GM12878 (cell line): ENCODE measurements at regions of chr7 and their contacts with region 1.

Region 1: GRCh38 chr7:34759452-34760125 is 101.6 kb downstream of the NPSR1 start:
- DNase-seq: no peak
- ATAC-seq: no peak
- H3K4me3 ChIP-seq: no peak overlapping the region
- H3K27ac ChIP-seq: no peak overlapping the region
- H3K4me1 ChIP-seq: no peaks in the 10 kb centered on the region
- H3K27me3 ChIP-seq: no peaks in the 10 kb centered on the region
- CTCF ChIP-seq: peak; percentile 55 to 57 (median 56); a peak in 5 of 6 replicates
- EP300 ChIP-seq: no peak
- POLR2A ChIP-seq: no peak
- RAD21 ChIP-seq: peak; percentile 32; the same call in 1 of the 2 replicates

Region 2: GRCh38 chr7:34682089-34682488 is 77.5 kb before region 1 on chr7:
- CTCF ChIA-PET with region 1: interaction called, 38 read pairs
- POLR2A ChIA-PET with region 1: interaction called, 5 read pairs
- RAD21 ChIA-PET with region 1: interaction called, 37 read pairs
- SMC1A ChIA-PET with region 1: interaction called, 13 read pairs
- in situ Hi-C with region 1: no loop called
- intact Hi-C with region 1: loop called (anchors 2 kb)
- DNase-seq: no peak
- ATAC-seq: no peak
- H3K4me3 ChIP-seq: no peak overlapping the region
- H3K27ac ChIP-seq: no peak overlapping the region
- H3K4me1 ChIP-seq: no peaks in the 10 kb centered on the region
- H3K27me3 ChIP-seq: no peaks in the 10 kb centered on the region
- CTCF ChIP-seq: no peak
- EP300 ChIP-seq: no peak
- POLR2A ChIP-seq: no peak
- RAD21 ChIP-seq: no peak

Region 3: GRCh38 chr7:34727464-34727995 is 32.1 kb before region 1 on chr7:
- CTCF ChIA-PET with region 1: interaction called, 92 read pairs
- POLR2A ChIA-PET with region 1: interaction called, 36 read pairs
- RAD21 ChIA-PET with region 1: interaction called, 362 read pairs
- SMC1A ChIA-PET with region 1: interaction called, 107 read pairs
- in situ Hi-C with region 1: no loop called
- intact Hi-C with region 1: loop called (anchors 1 kb)
- DNase-seq: no peak
- ATAC-seq: peak; percentile 76
- H3K4me3 ChIP-seq: no peak overlapping the region
- H3K27ac ChIP-seq: no peak overlapping the region
- H3K4me1 ChIP-seq: no peaks in the 10 kb centered on the region
- H3K27me3 ChIP-seq: no peaks in the 10 kb centered on the region
- CTCF ChIP-seq: no peak
- EP300 ChIP-seq: no peak
- POLR2A ChIP-seq: no peak
- RAD21 ChIP-seq: no peak

Region 4: GRCh38 chr7:34747867-34748727 is 11.5 kb before region 1 on chr7:
- CTCF ChIA-PET with region 1: interaction called, 46 read pairs
- POLR2A ChIA-PET with region 1: interaction called, 38 read pairs
- RAD21 ChIA-PET with region 1: interaction called, 48 read pairs
- SMC1A ChIA-PET with region 1: interaction called, 57 read pairs
- in situ Hi-C with region 1: no loop called
- intact Hi-C with region 1: no loop called
- DNase-seq: no peak
- ATAC-seq: peak; percentile 64
- H3K4me3 ChIP-seq: no peak overlapping the region
- H3K27ac ChIP-seq: no peak overlapping the region
- H3K4me1 ChIP-seq: no peaks in the 10 kb centered on the region
- H3K27me3 ChIP-seq: no peaks in the 10 kb centered on the region
- CTCF ChIP-seq: peak in 1 of 3 experiments; percentile 24; a peak in 2 of 6 replicates
- EP300 ChIP-seq: no peak
- POLR2A ChIP-seq: no peak
- RAD21 ChIP-seq: no peak

Region 5: GRCh38 chr7:34928049-34928448 is 168.5 kb after region 1 on chr7:
- CTCF ChIA-PET with region 1: interaction called, 21 read pairs
- POLR2A ChIA-PET with region 1: no interaction called
- RAD21 ChIA-PET with region 1: interaction called, 21 read pairs
- SMC1A ChIA-PET with region 1: interaction called, 11 read pairs
- in situ Hi-C with region 1: no loop called
- intact Hi-C with region 1: loop called (anchors 2 kb)
- DNase-seq: no peak
- ATAC-seq: peak; percentile 98
- H3K4me3 ChIP-seq: no peak overlapping the region
- H3K27ac ChIP-seq: no peak overlapping the region
- H3K4me1 ChIP-seq: no peaks in the 10 kb centered on the region
- H3K27me3 ChIP-seq: no peaks in the 10 kb centered on the region
- CTCF ChIP-seq: peak; percentile 59 to 64 (median 61)
- EP300 ChIP-seq: no peak
- POLR2A ChIP-seq: no peak
- RAD21 ChIP-seq: peak; percentile 44